ENCODE measurements at regions of chr9 and their contacts with region 1.

Region 1: DNA sequence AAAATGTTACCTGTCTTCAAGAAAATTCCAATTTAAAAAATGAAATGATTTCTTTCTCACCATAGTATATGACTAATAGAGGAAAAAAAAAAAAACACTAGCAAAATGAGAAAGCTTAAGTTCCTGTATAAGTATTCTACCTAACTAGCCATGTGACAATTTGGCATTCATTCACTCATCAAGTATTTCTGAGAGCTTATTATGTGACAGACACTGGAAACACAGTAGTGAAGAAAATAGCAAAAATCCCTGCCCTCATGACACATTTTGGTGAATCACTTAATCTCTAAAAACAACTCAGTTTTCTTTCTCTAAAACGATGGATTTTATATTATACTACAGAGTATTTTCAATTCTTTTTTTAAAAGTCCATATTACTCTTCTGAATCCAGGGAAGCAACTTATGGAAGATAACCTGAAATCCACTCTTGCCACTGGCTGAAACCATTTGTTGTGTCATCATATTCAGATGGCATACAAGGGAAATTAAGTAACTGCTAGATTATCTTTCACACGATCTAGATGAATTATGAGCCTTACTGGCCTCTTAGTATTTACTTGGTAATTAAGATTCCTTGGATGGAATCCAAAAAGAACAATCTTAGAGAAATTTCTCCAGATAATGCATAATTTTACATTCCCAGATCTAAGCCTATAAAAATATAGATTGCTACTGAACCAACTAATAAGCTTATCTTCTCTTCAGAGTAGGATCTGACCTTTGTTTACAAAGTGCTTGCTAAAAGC is 5.5 kb downstream of the PTBP3 start:
- DNase-seq: no peak
- H3K4me3 Mint-ChIP-seq: no peak overlapping the region
- H3K27ac Mint-ChIP-seq: peak overlapping the region; percentile 70
- H3K4me1 Mint-ChIP-seq: peaks cover 64% of the 10 kb centered on the region
- H3K27me3 Mint-ChIP-seq: no peaks in the 10 kb centered on the region

Region 2: DNA sequence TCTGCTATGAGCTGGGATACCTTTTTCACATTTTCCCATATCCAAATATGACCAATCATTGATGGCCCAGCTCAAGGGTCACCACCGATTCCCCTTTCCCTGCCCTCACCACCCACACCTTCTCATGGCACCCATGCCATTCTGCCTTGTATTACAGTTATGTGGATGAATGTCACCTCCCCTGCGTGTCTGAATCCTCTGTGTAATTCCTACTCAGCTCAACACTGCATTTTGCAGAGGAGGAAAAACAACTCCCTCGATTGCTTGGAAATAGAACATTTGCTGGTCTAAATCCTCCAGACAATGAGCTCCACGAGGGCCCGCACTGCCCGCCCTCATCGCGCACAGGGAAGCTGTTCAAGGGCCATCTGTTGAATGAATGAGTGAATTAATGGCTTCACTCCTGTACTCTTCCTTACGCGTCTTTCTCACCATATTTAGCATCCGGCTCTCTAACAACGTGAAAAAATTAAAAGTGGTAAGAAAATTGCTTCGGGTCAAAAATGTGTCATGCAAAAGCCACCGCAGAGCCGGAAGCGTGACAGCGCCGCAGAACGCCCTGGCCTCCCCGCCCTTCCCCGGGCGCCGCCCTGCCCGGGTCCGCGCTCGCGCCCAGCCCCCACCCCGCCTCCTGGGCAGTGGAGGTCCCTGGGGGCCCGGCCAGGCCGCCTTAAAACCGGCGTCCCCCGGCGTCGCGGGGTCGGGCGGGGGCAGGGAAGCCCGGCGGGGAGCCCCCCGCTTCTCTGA is 153.5 kb before region 1 on chr9:
- CTCF ChIA-PET with region 1: interaction called, 3 read pairs
- POLR2A ChIA-PET with region 1: interaction called, 5 read pairs
- intact Hi-C with region 1: loop called (anchors 1 kb)
- DNase-seq: peak; percentile 88
- H3K4me3 Mint-ChIP-seq: peak overlapping the region; percentile 80
- H3K27ac Mint-ChIP-seq: peak overlapping the region; percentile 84
- H3K4me1 Mint-ChIP-seq: peaks cover 40% of the 10 kb centered on the region
- H3K27me3 Mint-ChIP-seq: peaks cover 8% of the 10 kb centered on the region

Region 3: DNA sequence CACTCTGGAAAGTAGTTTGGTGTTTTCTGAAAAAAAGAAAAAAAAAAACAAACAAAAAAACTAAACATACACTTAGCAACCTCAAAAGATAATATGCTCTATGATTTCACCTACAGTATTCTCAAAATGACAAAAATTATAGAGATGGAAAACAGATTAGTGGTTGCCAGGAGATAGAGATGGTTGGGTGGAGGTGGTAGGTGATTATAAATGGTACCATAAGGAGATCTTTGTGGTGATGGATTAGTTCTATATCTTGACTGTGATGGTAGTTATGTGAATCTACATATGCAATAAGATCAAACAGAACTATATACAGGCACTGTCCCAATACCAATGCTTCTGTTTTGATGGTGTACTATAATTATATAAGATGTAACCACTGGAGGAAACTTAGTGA is 26.5 kb before region 1 on chr9:
- CTCF ChIA-PET with region 1: no interaction called
- POLR2A ChIA-PET with region 1: no interaction called
- intact Hi-C with region 1: loop called (anchors 1 kb)
- DNase-seq: no peak
- H3K4me3 Mint-ChIP-seq: no peak overlapping the region
- H3K27ac Mint-ChIP-seq: no peak overlapping the region
- H3K4me1 Mint-ChIP-seq: peaks cover 40% of the 10 kb centered on the region
- H3K27me3 Mint-ChIP-seq: no peaks in the 10 kb centered on the region

Region 4: GRCh38 chr9:112315331-112316257 is 12.3 kb before region 1 on chr9:
- CTCF ChIA-PET with region 1: interaction called, 7 read pairs
- POLR2A ChIA-PET with region 1: interaction called, 8 read pairs
- intact Hi-C with region 1: loop called (anchors 1 kb)
- DNase-seq: no peak
- H3K4me3 Mint-ChIP-seq: no peak overlapping the region
- H3K27ac Mint-ChIP-seq: peak overlapping the region; percentile 58
- H3K4me1 Mint-ChIP-seq: peaks cover 63% of the 10 kb centered on the region
- H3K27me3 Mint-ChIP-seq: no peaks in the 10 kb centered on the region

Measured in activated CD4-positive, alpha-beta memory T cell treated with anti-CD3 and anti-CD28 coated beads for 36 hours (primary cell).